B cell (primary cell): ENCODE measurements at regions of chr11 and their contacts with region 1.

Region 1: GRCh38 chr11:128757235-128757711 is 63.4 kb downstream of the FLI1 start:
- DNase-seq: peak; percentile 90
- ATAC-seq: peak; percentile 82
- H3K4me3 ChIP-seq: peak overlapping the region in 1 of 5 experiments; percentile 25
- H3K4me3 Mint-ChIP-seq: peak overlapping the region; percentile 17
- H3K27ac ChIP-seq: peak overlapping the region; percentile 78 to 79
- H3K27ac Mint-ChIP-seq: peak overlapping the region; percentile 71
- H3K4me1 ChIP-seq: peaks cover 53 to 74% of the 10 kb centered on the region in 2 donors
- H3K4me1 Mint-ChIP-seq: peaks cover 82% of the 10 kb centered on the region
- H3K27me3 ChIP-seq: no peaks in the 10 kb centered on the region
- H3K27me3 Mint-ChIP-seq: no peaks in the 10 kb centered on the region
- CTCF ChIP-seq: peak; percentile 83

Region 2: GRCh38 chr11:128157423-128158298 is 599.6 kb before region 1 on chr11:
- CTCF ChIA-PET with region 1: interaction called, 18 read pairs
- POLR2A ChIA-PET with region 1: no interaction called
- intact Hi-C with region 1: no loop called
- DNase-seq: peak; percentile 82
- ATAC-seq: peak; percentile 91
- H3K4me3 ChIP-seq: peak overlapping the region in 3 of 5 experiments; percentile 22 to 37 (median 23)
- H3K4me3 Mint-ChIP-seq: peak overlapping the region; percentile 81
- H3K27ac ChIP-seq: no peak overlapping the region
- H3K27ac Mint-ChIP-seq: no peak overlapping the region
- H3K4me1 ChIP-seq: peaks cover 0 to 3% of the 10 kb centered on the region in 2 donors
- H3K4me1 Mint-ChIP-seq: peaks cover 2% of the 10 kb centered on the region
- H3K27me3 ChIP-seq: peaks cover 0 to 7% (median 0%) of the 10 kb centered on the region in 4 experiments
- H3K27me3 Mint-ChIP-seq: peaks cover 15% of the 10 kb centered on the region
- CTCF ChIP-seq: peak; percentile 99

Region 3: GRCh38 chr11:128552783-128553661 is 204.3 kb before region 1 on chr11:
- CTCF ChIA-PET with region 1: interaction called, 11 read pairs
- POLR2A ChIA-PET with region 1: interaction called, 3 read pairs
- intact Hi-C with region 1: loop called (anchors 5 kb)
- DNase-seq: peak; percentile 93
- ATAC-seq: peak; percentile 80
- H3K4me3 ChIP-seq: peak overlapping the region; percentile 4 to 58 (median 27)
- H3K4me3 Mint-ChIP-seq: peak overlapping the region; percentile 85
- H3K27ac ChIP-seq: peak overlapping the region; percentile 92 to 93
- H3K27ac Mint-ChIP-seq: peak overlapping the region; percentile 99
- H3K4me1 ChIP-seq: peaks cover 62 to 71% of the 10 kb centered on the region in 2 donors
- H3K4me1 Mint-ChIP-seq: peaks cover 70% of the 10 kb centered on the region
- H3K27me3 ChIP-seq: no peaks in the 10 kb centered on the region
- H3K27me3 Mint-ChIP-seq: no peaks in the 10 kb centered on the region
- CTCF ChIP-seq: peak; percentile 10

Region 4: GRCh38 chr11:128695539-128696221 is 61.6 kb before region 1 on chr11:
- CTCF ChIA-PET with region 1: interaction called, 12 read pairs
- POLR2A ChIA-PET with region 1: interaction called, 10 read pairs
- intact Hi-C with region 1: loop called (anchors 1 kb)
- DNase-seq: peak; percentile 81
- ATAC-seq: peak; percentile 53
- H3K4me3 ChIP-seq: peak overlapping the region; percentile 62 to 100 (median 94)
- H3K4me3 Mint-ChIP-seq: peak overlapping the region; percentile 94
- H3K27ac ChIP-seq: peak overlapping the region; percentile 61 to 92
- H3K27ac Mint-ChIP-seq: peak overlapping the region; percentile 95
- H3K4me1 ChIP-seq: peaks cover 55 to 62% of the 10 kb centered on the region in 2 donors
- H3K4me1 Mint-ChIP-seq: peaks cover 62% of the 10 kb centered on the region
- H3K27me3 ChIP-seq: peaks cover 0 to 12% (median 4%) of the 10 kb centered on the region in 4 experiments
- H3K27me3 Mint-ChIP-seq: no peaks in the 10 kb centered on the region
- CTCF ChIP-seq: no peak

Region 5: GRCh38 chr11:128725630-128726319 is 31.5 kb before region 1 on chr11:
- CTCF ChIA-PET with region 1: interaction called, 23 read pairs
- POLR2A ChIA-PET with region 1: interaction called, 7 read pairs
- intact Hi-C with region 1: loop called (anchors 1 kb)
- DNase-seq: peak; percentile 90
- ATAC-seq: peak; percentile 67
- H3K4me3 ChIP-seq: peak overlapping the region; percentile 27 to 57 (median 43)
- H3K4me3 Mint-ChIP-seq: peak overlapping the region; percentile 93
- H3K27ac ChIP-seq: peak overlapping the region; percentile 70 to 88
- H3K27ac Mint-ChIP-seq: peak overlapping the region; percentile 92
- H3K4me1 ChIP-seq: peaks cover 98 to 100% of the 10 kb centered on the region in 2 donors
- H3K4me1 Mint-ChIP-seq: peaks cover 96% of the 10 kb centered on the region
- H3K27me3 ChIP-seq: no peaks in the 10 kb centered on the region
- H3K27me3 Mint-ChIP-seq: no peaks in the 10 kb centered on the region
- CTCF ChIP-seq: no peak

Region 6: DNA sequence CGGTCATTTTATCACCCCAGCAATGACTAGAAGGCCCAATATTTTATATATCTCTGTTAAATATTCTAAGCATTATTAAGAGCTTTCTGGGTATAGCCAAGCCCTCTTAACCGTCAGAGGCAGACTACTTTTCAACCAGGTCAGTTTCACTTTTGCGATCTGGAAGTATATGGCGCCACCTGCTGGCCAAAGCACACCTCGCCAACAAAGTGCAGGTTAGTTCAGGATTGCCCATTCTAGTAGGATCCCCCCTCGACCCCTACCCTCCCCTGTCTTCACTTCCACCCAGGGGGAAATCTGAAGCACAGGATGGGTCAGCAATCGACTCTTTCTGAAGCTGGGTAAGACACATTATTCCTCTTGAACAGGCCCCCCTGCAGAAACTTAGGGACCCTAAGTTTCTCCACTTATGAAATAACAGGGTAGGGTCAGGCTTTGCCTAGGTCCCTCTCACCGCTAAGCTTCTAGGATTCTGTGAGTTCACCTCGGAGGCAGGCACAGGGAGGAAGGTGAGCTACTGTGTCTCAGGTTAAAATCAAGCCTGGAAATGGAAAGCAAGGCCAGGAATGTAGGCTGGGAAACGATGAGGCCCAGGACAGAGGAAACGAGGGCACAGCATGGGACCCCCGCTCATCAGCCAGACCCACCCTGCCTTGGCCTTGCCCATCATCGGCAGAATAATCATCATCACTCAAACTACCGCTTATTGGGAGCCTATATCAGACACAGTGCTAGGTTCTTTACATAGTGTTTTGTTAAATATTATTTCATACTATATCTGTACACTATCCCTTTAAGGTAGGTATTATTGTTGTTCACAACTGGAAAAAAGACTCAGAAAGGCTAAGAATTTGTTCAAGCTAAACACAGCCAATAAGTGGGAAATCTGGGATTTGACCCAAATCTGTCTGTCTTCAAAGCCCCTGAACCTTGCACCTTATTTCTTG is 74.2 kb after region 1 on chr11:
- CTCF ChIA-PET with region 1: interaction called, 48 read pairs
- POLR2A ChIA-PET with region 1: no interaction called
- intact Hi-C with region 1: loop called (anchors 1 kb)
- DNase-seq: peak; percentile 88
- ATAC-seq: peak; percentile 89
- H3K4me3 ChIP-seq: peak overlapping the region; percentile 22 to 55 (median 36)
- H3K4me3 Mint-ChIP-seq: peak overlapping the region; percentile 74
- H3K27ac ChIP-seq: peak overlapping the region; percentile 60 to 78
- H3K27ac Mint-ChIP-seq: peak overlapping the region; percentile 90
- H3K4me1 ChIP-seq: peaks cover 66 to 68% of the 10 kb centered on the region in 2 donors
- H3K4me1 Mint-ChIP-seq: peaks cover 73% of the 10 kb centered on the region
- H3K27me3 ChIP-seq: no peaks in the 10 kb centered on the region
- H3K27me3 Mint-ChIP-seq: no peaks in the 10 kb centered on the region
- CTCF ChIP-seq: peak; percentile 93